Heart left ventricle (tissue), 16 donors: ENCODE measurements at regions of chr6 and their contacts with region 1.

Region 1: GRCh38 chr6:133865680-133866079 is 23.2 kb upstream of the TCF21 start:
- DNase-seq: no peak
- ATAC-seq: no peak
- H3K4me3 ChIP-seq: no peak overlapping the region
- H3K27ac ChIP-seq: no peak overlapping the region
- H3K4me1 ChIP-seq: no peaks in the 10 kb centered on the region
- H3K27me3 ChIP-seq: peaks cover 0 to 6% (median 0%) of the 10 kb centered on the region in 9 donors
- CTCF ChIP-seq: no peak
- POLR2A ChIP-seq: no peak

Region 2: DNA sequence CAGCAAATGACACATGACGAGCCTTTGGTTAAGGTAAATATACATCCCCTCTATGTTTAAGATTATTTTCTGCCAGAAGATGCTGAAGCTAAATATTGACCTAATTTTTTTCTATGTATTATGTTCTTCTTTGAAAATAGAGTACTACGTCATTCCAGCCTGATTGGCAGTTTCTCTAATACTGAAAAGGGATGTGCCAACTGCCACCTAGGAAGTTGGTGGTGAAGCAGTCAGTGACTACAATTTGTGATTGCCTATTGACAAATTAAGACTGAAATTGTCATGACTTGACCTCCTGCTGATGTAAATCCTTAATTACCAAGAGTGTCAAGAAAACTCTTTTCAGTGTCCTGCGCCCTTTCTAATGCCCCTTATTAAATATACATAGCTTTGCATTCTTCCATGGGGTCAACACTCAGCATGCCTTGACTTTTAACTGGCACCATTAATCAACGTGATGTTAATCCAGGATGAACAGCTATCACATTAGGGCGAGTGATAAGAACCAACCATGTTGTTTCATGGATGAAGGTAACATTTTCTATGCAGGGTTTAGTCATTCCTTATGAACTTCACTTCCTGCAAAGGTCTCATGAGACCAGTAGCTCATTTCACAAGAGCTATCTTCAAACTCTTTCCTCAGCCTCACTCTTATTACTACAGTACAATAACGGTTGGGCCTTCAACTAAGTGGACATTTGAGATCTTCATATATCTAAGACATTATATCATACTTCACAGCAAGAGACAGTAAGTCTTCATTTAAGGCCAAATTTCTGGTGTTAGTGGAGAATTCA is 474.7 kb after region 1 on chr6:
- intact Hi-C with region 1: no loop called
- DNase-seq: no peak
- ATAC-seq: no peak
- H3K4me3 ChIP-seq: no peak overlapping the region
- H3K27ac ChIP-seq: no peak overlapping the region
- H3K4me1 ChIP-seq: peaks cover 0 to 28% (median 7%) of the 10 kb centered on the region in 12 donors
- H3K27me3 ChIP-seq: no peaks in the 10 kb centered on the region
- CTCF ChIP-seq: no peak
- POLR2A ChIP-seq: no peak

Region 3: GRCh38 chr6:135180542-135181332 is 1315.1 kb after region 1 on chr6 and contains the start of gene MYB:
- intact Hi-C with region 1: loop called in 1 of 10 experiments (anchors 10 kb)
- DNase-seq: peak; percentile 30 to 83 (median 47)
- ATAC-seq: peak; percentile 55 to 90 (median 72)
- H3K4me3 ChIP-seq: peak within 1 kb of the TSS; percentile 41 to 72 (median 55)
- H3K27ac ChIP-seq: no peak within 1 kb of the TSS
- H3K4me1 ChIP-seq: peaks cover 0 to 40% (median 19%) of the 10 kb centered on the region in 12 donors
- H3K27me3 ChIP-seq: peaks cover 6 to 38% (median 28%) of the 10 kb centered on the region in 9 donors
- CTCF ChIP-seq: peak in 2 of 12 donors; percentile 8 to 12
- POLR2A ChIP-seq: no peak
- total RNA-seq, gene MYB: 0.12 to 0.53 (median 0.20) TPM in 3 of 9 donors, not detected in the others